Sciatic nerve (tissue), 2 donors: ENCODE measurements at regions of chr4 and their contacts with region 1.

Region 1: DNA sequence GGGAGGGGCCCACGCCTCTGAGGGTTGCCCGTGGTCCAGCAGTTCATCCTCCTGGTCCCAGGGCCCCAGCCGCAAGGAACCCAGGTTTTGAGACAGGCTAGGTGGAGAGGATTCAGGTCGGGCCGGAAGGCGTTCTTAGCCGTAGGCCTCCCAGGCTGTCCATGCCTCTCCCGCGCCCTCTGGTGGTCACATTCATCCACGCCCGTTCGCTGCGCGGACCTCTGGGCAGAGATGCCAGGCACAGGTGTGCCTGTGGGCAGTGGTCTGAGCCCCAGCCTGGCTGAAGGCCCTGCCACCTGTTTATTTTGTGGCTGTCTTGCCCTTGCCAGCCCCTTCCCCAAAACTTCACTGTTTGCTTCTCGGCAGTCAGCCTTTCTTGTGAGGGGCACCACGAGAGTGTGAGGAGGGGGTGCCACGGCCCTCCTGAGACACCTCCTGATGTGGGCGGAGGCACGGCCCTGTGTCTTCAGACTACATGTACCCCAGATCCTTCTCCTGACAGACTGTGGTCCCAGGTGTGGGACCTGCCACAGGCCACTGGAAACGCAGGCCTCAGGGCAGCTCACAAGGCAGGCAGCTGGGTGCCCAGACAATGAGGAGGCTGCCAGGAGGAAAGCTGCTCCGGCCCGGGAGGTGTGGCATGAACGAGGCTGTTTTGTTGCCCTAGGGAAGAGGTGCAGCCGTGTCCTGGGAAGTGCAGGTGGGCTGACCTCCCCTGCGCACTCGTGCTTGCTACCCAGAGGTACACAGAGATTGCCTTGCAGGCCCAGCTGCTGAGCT is 5.0 kb downstream of the UVSSA start:
- DNase-seq: peak; percentile 93
- ATAC-seq: peak; percentile 55

Region 2: GRCh38 chr4:1130316-1131186 is 221.5 kb before region 1 on chr4:
- intact Hi-C with region 1: loop called (anchors 10 kb)
- DNase-seq: peak; percentile 86
- ATAC-seq: peak; percentile 97

Region 3: DNA sequence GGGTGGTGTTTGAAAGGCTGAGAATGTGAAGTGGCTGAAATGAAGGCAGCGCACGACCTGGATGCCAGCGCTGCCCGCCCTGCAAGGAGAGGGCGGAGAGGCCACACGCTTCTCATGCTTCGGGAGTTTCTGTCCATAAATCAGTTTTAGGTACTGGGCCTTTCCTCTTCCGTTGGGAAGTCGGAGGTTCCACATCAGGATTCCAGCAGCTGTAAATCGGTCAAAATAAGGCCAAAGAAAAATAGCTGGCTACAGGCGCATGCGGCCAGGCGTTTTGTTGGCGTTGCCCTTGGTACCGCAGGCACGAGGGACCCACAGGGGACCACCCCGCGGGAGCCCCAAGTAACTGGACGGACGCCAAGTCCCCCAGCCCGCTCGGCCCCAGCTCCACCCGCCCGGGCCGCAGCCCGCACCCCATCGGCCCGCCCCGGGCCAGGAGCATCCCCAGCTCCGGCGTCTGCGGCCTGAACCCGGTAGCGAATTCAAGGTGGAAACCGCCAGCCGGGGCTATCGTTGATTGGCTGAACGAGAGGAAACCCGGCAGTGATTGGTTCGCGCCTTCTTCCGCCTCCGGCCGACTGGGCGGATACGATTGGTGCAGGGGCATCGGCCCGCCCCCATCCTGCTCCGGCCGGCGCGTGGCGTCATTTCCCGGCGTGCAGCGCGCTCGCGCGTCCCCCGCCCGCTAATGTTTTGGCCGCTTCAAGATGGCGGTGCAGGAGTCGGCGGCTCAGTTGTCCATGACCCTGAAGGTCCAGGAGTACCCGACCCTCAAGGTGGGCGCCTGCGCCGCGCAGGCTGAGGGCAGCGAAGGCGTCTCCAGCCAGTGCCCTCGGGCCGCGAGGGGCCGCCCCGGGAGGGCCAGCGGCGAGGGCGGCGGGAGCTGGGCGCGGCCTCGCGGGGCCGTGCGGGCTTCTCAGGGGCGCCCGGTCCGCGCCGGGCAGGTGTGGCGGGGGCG is 62.6 kb before region 1 on chr4 and contains the start of gene MAEA:
- intact Hi-C with region 1: no loop called
- DNase-seq: peak; percentile 98
- ATAC-seq: peak; percentile 99
- total RNA-seq, gene MAEA: 68.6 TPM

Region 4: GRCh38 chr4:1628892-1629698 is 277.1 kb after region 1 on chr4:
- intact Hi-C with region 1: loop called (anchors 5 kb)
- DNase-seq: peak; percentile 84
- ATAC-seq: peak; percentile 86

Region 5: GRCh38 chr4:2787230-2788088 is 1435.4 kb after region 1 on chr4:
- intact Hi-C with region 1: no loop called
- DNase-seq: peak; percentile 59
- ATAC-seq: peak; percentile 54